CD4-positive, alpha-beta T cell (primary cell): ENCODE measurements at regions of chr9 and their contacts with region 1.

Region 1: GRCh38 chr9:125407974-125408900 is 146.6 kb downstream of the GAPVD1 start:
- DNase-seq: peak; percentile 50 to 85 (median 72)
- ATAC-seq: peak; percentile 85
- H3K4me3 ChIP-seq: peak overlapping the region; percentile 31
- H3K4me3 Mint-ChIP-seq: peak overlapping the region; percentile 80
- H3K27ac ChIP-seq: no peak overlapping the region
- H3K27ac Mint-ChIP-seq: no peak overlapping the region
- H3K4me1 ChIP-seq: peaks cover 14% of the 10 kb centered on the region
- H3K4me1 Mint-ChIP-seq: peaks cover 8% of the 10 kb centered on the region
- H3K27me3 ChIP-seq: peaks cover 7 to 8% of the 10 kb centered on the region in 2 experiments
- H3K27me3 Mint-ChIP-seq: peaks cover 44% of the 10 kb centered on the region
- CTCF ChIP-seq: peak; percentile 90

Region 2: GRCh38 chr9:125558453-125559092 is 150.3 kb after region 1 on chr9:
- CTCF ChIA-PET with region 1: no interaction called
- POLR2A ChIA-PET with region 1: no interaction called
- intact Hi-C with region 1: loop called in 1 of 2 experiments (anchors 5 kb)
- DNase-seq: peak in 13 of 14 experiments; percentile 10 to 76 (median 30)
- ATAC-seq: peak; percentile 70
- H3K4me3 ChIP-seq: no peak overlapping the region
- H3K4me3 Mint-ChIP-seq: no peak overlapping the region
- H3K27ac ChIP-seq: no peak overlapping the region
- H3K27ac Mint-ChIP-seq: no peak overlapping the region
- H3K4me1 ChIP-seq: no peaks in the 10 kb centered on the region
- H3K4me1 Mint-ChIP-seq: peaks cover 11% of the 10 kb centered on the region
- H3K27me3 ChIP-seq: no peaks in the 10 kb centered on the region
- H3K27me3 Mint-ChIP-seq: no peaks in the 10 kb centered on the region
- CTCF ChIP-seq: peak; percentile 68

Region 3: DNA sequence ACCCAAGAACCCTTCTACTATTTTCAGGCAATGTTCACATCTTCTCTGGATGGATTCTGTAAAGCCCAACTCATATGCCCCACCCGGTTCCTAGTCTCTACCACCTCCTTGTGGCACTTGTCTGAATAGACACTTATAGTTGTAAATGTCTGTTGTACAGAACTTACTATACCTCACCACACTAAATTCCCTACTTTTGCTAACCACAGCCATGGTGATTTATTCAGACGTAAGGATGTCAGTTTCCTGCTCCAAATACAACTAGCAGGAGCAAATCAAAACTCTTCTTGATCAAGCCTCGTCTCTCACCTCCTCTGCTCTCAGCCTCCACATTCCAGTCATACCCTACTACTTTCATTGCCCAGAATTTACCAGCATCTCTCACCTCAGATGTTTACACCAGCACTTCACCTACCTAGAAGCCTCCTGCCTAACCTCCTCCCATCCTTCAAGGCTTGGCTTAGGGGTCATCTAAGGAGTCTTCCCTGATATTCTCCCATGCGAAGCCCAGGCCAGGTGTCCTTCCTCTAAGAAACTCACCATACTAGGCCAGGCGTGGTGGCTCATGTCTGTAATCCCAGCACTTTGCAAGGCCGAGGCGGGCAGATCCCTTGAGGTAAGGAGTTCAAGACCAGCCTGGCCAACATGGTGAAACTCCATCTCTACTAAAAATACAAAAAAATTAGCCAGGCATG is 223.3 kb after region 1 on chr9:
- CTCF ChIA-PET with region 1: interaction called, 5 read pairs
- POLR2A ChIA-PET with region 1: no interaction called
- intact Hi-C with region 1: loop called in 1 of 2 experiments (anchors 2 kb)
- DNase-seq: peak in 4 of 14 experiments; percentile 19 to 54 (median 42)
- ATAC-seq: peak; percentile 75
- H3K4me3 ChIP-seq: no peak overlapping the region
- H3K4me3 Mint-ChIP-seq: no peak overlapping the region
- H3K27ac ChIP-seq: no peak overlapping the region
- H3K27ac Mint-ChIP-seq: no peak overlapping the region
- H3K4me1 ChIP-seq: peaks cover 21% of the 10 kb centered on the region
- H3K4me1 Mint-ChIP-seq: peaks cover 71% of the 10 kb centered on the region
- H3K27me3 ChIP-seq: no peaks in the 10 kb centered on the region
- H3K27me3 Mint-ChIP-seq: no peaks in the 10 kb centered on the region
- CTCF ChIP-seq: peak; percentile 29

Region 4: DNA sequence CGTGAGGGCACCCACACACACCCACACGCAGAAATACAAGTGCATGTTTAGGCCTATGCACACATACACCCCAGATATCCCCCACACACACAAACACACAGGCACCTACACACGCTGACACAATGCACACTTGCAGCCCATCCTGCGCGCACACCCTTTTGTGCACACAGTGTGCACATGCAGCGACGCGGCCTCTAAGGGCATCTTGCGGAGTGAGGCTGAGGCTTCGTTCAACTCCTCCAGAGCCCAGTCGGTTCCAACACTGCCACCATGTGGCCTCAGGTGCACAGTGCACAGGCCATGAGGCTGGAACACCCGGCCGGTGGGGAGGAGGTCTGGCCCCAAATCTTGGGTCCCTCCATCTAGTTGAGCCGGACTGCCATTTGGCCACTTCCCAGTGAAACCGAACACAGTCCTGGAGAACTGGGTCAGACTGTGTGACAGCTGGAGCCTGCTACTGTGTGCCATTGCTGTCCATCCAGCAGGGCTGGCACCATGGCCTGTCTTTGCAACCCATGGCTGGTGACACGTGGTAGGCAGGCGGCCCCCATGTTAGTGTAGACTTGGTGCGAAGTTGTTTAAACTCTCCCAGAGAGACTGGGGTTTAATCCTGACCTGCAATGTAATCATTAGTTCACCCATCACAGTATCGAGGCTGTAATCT is 820.7 kb after region 1 on chr9:
- CTCF ChIA-PET with region 1: interaction called, 3 read pairs
- POLR2A ChIA-PET with region 1: no interaction called
- intact Hi-C with region 1: loop called (anchors 1 kb)
- DNase-seq: peak; percentile 41 to 76 (median 58)
- ATAC-seq: peak; percentile 97
- H3K4me3 ChIP-seq: no peak overlapping the region
- H3K4me3 Mint-ChIP-seq: no peak overlapping the region
- H3K27ac ChIP-seq: no peak overlapping the region
- H3K27ac Mint-ChIP-seq: no peak overlapping the region
- H3K4me1 ChIP-seq: peaks cover 5% of the 10 kb centered on the region
- H3K4me1 Mint-ChIP-seq: peaks cover 13% of the 10 kb centered on the region
- H3K27me3 ChIP-seq: peaks cover 7 to 16% of the 10 kb centered on the region in 2 experiments
- H3K27me3 Mint-ChIP-seq: peaks cover 65% of the 10 kb centered on the region
- CTCF ChIP-seq: peak; percentile 91

Region 5: DNA sequence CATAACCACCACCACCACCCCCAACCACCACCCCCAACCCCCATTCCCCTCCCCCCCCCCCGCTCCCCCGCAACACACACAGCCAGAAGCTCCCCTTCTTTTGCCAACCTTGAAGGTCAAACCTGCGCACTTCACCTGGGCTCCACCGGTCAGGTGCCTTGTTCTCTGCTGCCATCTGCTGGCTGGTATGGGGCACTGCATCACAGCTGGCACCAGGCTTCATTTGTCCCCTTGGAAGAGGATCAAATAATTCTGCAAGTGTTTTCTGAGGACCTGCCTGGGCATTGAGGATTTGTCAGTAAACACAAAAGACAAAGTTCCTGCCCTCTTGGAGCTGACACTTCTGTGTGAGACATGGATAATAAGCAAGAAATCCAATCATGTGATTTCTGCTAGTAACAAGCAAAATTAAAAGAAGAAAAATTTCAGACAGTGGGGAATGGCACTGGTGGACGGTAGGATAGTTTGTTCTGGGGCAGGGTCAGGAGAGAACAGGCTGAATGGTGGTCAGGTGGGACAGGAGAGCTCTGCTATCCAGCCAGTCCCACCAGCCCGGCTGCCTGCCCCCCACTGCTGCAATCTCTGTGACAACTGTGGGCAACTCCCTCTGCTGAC is 1149.9 kb after region 1 on chr9:
- CTCF ChIA-PET with region 1: interaction called, 3 read pairs
- POLR2A ChIA-PET with region 1: no interaction called
- intact Hi-C with region 1: loop called in 1 of 2 experiments (anchors 2 kb)
- DNase-seq: peak; percentile 29 to 83 (median 60)
- ATAC-seq: peak; percentile 58
- H3K4me3 ChIP-seq: no peak overlapping the region
- H3K4me3 Mint-ChIP-seq: no peak overlapping the region
- H3K27ac ChIP-seq: no peak overlapping the region
- H3K27ac Mint-ChIP-seq: no peak overlapping the region
- H3K4me1 ChIP-seq: no peaks in the 10 kb centered on the region
- H3K4me1 Mint-ChIP-seq: no peaks in the 10 kb centered on the region
- H3K27me3 ChIP-seq: peaks cover 16 to 21% of the 10 kb centered on the region in 2 experiments
- H3K27me3 Mint-ChIP-seq: peaks cover 38% of the 10 kb centered on the region
- CTCF ChIP-seq: peak; percentile 84